ENCODE measurements at regions of chr16 and their contacts with region 1.

Region 1: GRCh38 chr16:24036614-24037013 is 200.8 kb downstream of the PRKCB start:
- DNase-seq: peak; percentile 46
- ATAC-seq: peak; percentile 60
- H3K4me3 Mint-ChIP-seq: no peak overlapping the region
- H3K27ac Mint-ChIP-seq: peak overlapping the region; percentile 7
- H3K4me1 Mint-ChIP-seq: peaks cover 41% of the 10 kb centered on the region
- H3K27me3 Mint-ChIP-seq: no peaks in the 10 kb centered on the region
- CTCF ChIP-seq: peak; percentile 81

Region 2: GRCh38 chr16:23729503-23730424 is 306.9 kb before region 1 on chr16:
- CTCF ChIA-PET with region 1: interaction called, 17 read pairs
- POLR2A ChIA-PET with region 1: no interaction called
- intact Hi-C with region 1: loop called (anchors 10 kb)
- DNase-seq: no peak
- ATAC-seq: no peak
- H3K4me3 Mint-ChIP-seq: no peak overlapping the region
- H3K27ac Mint-ChIP-seq: no peak overlapping the region
- H3K4me1 Mint-ChIP-seq: peaks cover 6% of the 10 kb centered on the region
- H3K27me3 Mint-ChIP-seq: peaks cover 11% of the 10 kb centered on the region
- CTCF ChIP-seq: no peak

Region 3: DNA sequence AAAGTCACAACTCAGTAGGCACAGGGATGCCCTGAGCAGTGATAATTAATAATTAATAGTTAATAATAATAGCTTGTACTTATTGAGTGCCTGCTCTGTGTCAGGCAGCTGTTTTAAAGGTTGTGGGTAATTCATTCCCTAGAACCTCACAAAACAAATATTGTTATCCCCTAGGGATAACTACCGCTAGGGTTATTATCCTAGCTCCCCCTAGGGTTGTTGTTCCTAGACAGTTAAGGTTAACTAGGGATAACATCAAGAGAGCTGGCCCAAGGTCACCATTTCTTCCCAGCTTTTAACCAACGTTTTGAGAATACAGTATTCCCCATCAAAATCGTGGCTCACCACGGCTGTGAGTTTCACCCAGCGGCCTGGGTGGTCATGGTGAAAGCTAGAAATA is 20.7 kb before region 1 on chr16:
- CTCF ChIA-PET with region 1: interaction called, 22 read pairs
- POLR2A ChIA-PET with region 1: interaction called, 3 read pairs
- intact Hi-C with region 1: no loop called
- DNase-seq: no peak
- ATAC-seq: no peak
- H3K4me3 Mint-ChIP-seq: no peak overlapping the region
- H3K27ac Mint-ChIP-seq: peak overlapping the region; percentile 52
- H3K4me1 Mint-ChIP-seq: peaks cover 48% of the 10 kb centered on the region
- H3K27me3 Mint-ChIP-seq: no peaks in the 10 kb centered on the region
- CTCF ChIP-seq: no peak

Measured in activated CD8-positive, alpha-beta T cell treated with anti-CD3 and anti-CD28 coated beads for 36 hours (primary cell).